PC-9 (cell line): ENCODE measurements at regions of chr10 and their contacts with region 1.

Region 1: GRCh38 chr10:115093286-115093775 is at the start of gene ATRNL1:
- DNase-seq: peak in 1 of 2 experiments; percentile 9
- H3K4me3 ChIP-seq: peak within 1 kb of the TSS; percentile 40; the same call in 1 of the 2 replicates
- H3K27ac ChIP-seq: no peak within 1 kb of the TSS
- H3K4me1 ChIP-seq: no peaks in the 10 kb centered on the region
- H3K27me3 ChIP-seq: no peaks in the 10 kb centered on the region
- CTCF ChIP-seq: no peak
- total RNA-seq, gene ATRNL1: not detected in 2 replicates

Region 2: DNA sequence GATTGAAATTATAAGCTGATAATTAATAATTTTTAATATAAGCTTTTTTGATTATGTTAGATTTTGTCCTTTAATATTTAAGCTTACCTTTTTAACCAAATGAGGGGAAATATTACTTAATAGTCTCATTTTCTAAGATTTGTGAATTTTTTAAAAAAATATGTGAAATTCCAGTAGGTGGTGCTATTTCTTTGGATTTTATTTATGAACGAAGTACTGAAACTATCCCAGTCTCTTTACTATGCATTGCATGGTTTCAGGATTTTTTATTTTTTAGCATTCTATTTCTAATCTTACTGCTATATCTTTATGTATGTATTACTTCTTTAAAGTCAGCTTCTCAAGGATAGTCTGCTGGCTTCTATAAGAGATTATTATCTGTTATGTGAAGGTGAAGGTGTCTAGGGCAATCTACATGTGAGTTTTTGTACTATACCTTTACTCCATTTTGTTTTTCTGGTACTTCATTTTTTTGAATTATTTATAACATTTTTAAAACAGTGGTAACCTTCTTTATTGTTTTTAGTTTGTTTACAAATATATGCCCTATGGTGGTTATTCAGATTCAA is 78.1 kb after region 1 on chr10:
- CTCF ChIA-PET with region 1: no interaction called
- POLR2A ChIA-PET with region 1: no interaction called
- intact Hi-C with region 1: no loop called
- DNase-seq: no peak
- H3K4me3 ChIP-seq: no peak overlapping the region
- H3K27ac ChIP-seq: no peak overlapping the region
- H3K4me1 ChIP-seq: no peaks in the 10 kb centered on the region
- H3K27me3 ChIP-seq: no peaks in the 10 kb centered on the region
- CTCF ChIP-seq: peak; percentile 62

Region 3: GRCh38 chr10:116241642-116242410 is 1148.5 kb after region 1 on chr10:
- CTCF ChIA-PET with region 1: interaction called, 13 read pairs
- POLR2A ChIA-PET with region 1: no interaction called
- intact Hi-C with region 1: no loop called
- DNase-seq: no peak
- H3K4me3 ChIP-seq: no peak overlapping the region
- H3K27ac ChIP-seq: no peak overlapping the region
- H3K4me1 ChIP-seq: no peaks in the 10 kb centered on the region
- H3K27me3 ChIP-seq: no peaks in the 10 kb centered on the region; the same call in 1 of the 2 replicates
- CTCF ChIP-seq: no peak

Region 4: GRCh38 chr10:117086545-117086944 is 1993.2 kb after region 1 on chr10:
- CTCF ChIA-PET with region 1: interaction called, 16 read pairs
- POLR2A ChIA-PET with region 1: no interaction called
- intact Hi-C with region 1: no loop called
- DNase-seq: peak in 1 of 2 experiments; percentile 38
- H3K4me3 ChIP-seq: no peak overlapping the region
- H3K27ac ChIP-seq: peak overlapping the region; percentile 40; the same call in 1 of the 2 replicates
- H3K4me1 ChIP-seq: peaks cover 13% of the 10 kb centered on the region
- H3K27me3 ChIP-seq: no peaks in the 10 kb centered on the region
- CTCF ChIP-seq: no peak